BJ (cell line): ENCODE measurements at regions of chr12 and their contacts with region 1.

Region 1: DNA sequence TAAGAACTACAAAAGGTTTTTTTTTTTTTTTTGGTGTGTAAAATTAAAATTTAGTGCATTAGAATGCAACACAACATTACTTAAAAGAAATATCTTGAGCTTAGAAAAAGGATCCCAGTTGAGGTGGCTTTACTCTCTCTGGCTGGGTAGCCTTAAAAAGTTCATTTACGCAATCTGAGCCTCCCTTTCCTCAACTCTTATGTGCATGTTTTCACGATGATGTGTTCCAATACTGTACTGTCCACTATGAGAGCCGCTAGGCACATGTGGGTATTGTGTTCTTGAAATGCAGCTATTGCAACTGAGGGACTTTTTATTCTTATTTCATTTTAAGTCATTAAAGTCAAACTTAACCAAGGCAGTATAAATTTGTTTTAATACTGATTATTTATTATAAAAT is 460.9 kb upstream of the SYT1 start:
- DNase-seq: no peak
- H3K4me3 ChIP-seq: no peak overlapping the region
- H3K27me3 ChIP-seq: no peaks in the 10 kb centered on the region
- CTCF ChIP-seq: no peak

Region 2: GRCh38 chr12:78439666-78440065 is 36.0 kb after region 1 on chr12:
- CTCF ChIA-PET with region 1: no interaction called
- POLR2A ChIA-PET with region 1: interaction called, 12 read pairs
- DNase-seq: no peak
- H3K4me3 ChIP-seq: no peak overlapping the region
- H3K27me3 ChIP-seq: no peaks in the 10 kb centered on the region
- CTCF ChIP-seq: no peak